ENCODE measurements at regions of chr1 and their contacts with region 1.

Region 1: DNA sequence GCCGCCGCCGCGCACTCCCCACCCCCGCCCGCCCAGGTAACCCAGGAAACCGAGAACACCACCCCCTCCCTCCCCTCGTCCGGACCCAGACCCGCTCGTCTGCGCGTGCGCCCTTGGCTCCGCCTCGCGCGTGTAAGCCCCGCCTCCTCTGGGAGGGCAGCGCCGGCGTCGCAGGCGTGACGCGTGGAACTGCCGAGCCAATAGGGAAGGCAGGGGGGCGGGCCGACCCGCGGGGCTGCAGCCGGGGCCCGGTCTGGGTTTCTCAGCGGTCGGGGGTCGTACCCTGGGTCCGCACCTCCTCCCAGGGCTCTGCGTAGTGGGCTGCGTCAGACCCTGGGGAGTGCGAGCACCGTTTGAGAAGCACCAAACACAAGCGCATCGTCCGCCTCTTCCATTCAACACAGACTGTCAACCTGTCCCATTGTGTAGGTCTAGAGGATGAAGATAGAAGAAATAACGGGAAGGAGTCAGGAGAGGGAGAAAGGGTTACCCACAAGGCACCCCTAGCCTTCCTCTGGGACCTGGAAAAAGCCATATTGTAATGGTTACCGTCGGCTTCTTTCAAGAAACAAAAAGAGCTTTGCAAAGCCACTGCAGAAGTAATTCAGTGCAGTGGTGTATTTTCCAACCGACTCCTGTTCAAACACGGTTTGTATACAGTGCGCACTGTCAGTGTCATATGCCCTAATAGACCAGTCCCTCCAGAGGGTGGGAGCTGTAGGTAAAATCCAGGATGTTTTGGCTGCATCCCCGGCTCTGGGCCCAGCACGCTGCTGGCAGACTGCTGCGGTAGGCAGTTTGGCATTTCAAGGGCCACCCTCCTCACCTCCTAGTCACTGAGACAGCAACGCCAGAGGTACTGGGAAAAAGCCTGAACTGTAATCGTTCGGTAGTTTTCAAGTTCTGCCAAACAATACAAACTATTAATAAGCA is 473 bp upstream of the LYST start:
- DNase-seq: peak; percentile 96
- H3K4me3 ChIP-seq: peak overlapping the region; percentile 78
- H3K27ac ChIP-seq: peak overlapping the region; percentile 82
- H3K4me1 ChIP-seq: peaks cover 21% of the 10 kb centered on the region
- CTCF ChIP-seq: no peak

Region 2: DNA sequence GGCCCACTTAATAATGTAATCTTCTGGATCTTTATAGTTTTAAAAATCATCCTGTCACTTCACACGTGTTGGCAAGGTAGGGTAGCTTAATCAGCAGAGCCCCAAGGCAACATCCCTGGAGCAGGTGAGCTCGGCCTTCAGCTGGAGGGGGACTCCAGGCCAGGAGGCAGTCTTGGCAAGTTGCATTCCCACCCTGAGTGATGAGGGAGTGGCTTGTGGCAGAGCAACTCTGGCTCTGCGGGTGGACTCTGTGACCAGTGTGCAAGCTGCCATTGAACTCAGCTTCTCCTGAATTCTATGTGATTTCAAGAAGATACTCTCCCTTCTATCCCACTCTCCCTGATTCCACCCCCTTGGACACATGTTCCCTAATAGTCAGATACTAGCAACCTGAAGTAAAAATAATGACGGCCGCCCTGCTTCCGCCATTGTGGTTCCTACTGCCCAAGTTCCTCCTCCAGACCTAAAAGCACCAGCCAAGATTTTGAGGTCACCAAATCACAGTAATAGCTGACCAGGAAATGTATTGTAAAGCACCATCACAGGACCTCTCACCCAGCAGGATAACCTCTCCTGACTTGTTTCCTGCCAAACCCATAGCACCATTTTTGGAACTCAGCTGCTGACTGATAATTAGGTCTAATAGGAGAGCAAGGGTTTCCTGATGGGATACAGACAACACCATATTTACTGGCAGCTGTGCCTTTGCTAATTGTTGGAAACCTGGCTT is 11.1 kb after region 1 on chr1:
- CTCF ChIA-PET with region 1: no interaction called
- POLR2A ChIA-PET with region 1: interaction called, 10 read pairs
- intact Hi-C with region 1: no loop called
- DNase-seq: no peak
- H3K4me3 ChIP-seq: no peak overlapping the region
- H3K27ac ChIP-seq: no peak overlapping the region
- H3K4me1 ChIP-seq: peaks cover 13% of the 10 kb centered on the region
- CTCF ChIP-seq: no peak

Region 3: DNA sequence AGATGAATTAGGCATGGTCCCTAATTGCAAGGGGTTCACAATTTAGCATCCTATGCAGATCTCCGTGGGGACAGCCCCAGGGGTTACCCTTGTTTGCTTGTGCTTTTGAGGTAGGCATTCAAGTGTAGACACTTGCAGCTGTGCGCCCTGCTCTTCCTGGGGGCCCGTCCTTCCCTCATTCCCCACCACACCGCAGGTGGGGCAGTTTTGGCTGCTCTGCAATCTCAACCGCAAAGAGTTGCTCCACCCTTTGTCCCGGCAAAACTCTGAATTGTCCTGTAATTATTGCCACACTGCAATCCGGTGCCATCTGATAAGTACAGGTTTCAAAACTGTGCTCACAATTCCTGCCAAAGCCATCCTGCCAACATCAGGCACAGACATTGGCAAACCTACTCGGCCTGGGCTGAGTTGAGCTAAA is 64.9 kb after region 1 on chr1:
- CTCF ChIA-PET with region 1: no interaction called
- POLR2A ChIA-PET with region 1: interaction called, 4 read pairs
- intact Hi-C with region 1: loop called (anchors 1 kb)
- DNase-seq: peak; percentile 41
- H3K4me3 ChIP-seq: no peak overlapping the region
- H3K27ac ChIP-seq: no peak overlapping the region
- H3K4me1 ChIP-seq: peaks cover 46% of the 10 kb centered on the region
- CTCF ChIP-seq: no peak

Region 4: GRCh38 chr1:235946571-235946981 is 79.4 kb after region 1 on chr1:
- CTCF ChIA-PET with region 1: no interaction called
- POLR2A ChIA-PET with region 1: no interaction called
- intact Hi-C with region 1: loop called (anchors 5 kb)
- DNase-seq: peak; percentile 13
- H3K4me3 ChIP-seq: no peak overlapping the region
- H3K27ac ChIP-seq: no peak overlapping the region
- H3K4me1 ChIP-seq: no peaks in the 10 kb centered on the region
- CTCF ChIP-seq: peak; percentile 61

Region 5: DNA sequence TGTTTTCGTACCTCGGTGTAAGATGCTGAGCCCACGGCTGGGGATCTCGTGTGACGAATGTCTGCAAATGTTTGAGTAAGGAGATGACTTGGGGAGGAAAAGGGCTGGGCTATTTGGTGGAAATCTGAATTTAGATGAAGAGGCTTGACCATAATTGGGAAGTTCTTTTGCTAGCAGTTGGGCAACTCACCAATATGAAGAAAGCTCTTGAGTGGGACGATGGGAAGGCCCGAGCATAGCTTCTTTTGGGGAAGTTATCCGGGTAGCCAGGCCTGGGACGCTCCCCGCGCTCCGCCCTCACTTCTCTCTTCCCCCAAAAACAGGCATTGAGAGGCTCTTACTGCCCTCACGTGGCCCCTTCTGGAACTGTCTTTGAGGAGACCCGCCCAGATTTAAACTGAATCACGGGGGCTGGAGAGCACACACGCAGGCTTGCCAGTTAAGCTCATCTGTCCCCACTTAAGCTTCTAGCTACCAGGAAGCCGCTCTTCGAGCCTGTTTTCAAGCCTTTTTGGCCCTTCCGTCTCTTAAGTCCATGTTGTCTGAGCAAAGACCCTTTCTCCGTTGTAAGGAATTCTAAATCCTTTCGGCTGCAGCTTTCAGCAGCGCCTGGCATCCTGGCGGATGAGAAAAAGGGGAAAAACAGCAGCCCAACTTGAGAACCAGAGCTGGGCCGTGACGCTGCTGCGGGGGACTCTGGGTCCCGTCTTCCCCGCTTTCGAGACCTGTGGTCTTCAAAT is 104.6 kb after region 1 on chr1:
- CTCF ChIA-PET with region 1: interaction called, 4 read pairs
- POLR2A ChIA-PET with region 1: interaction called, 5 read pairs
- intact Hi-C with region 1: loop called (anchors 1 kb)
- DNase-seq: peak; percentile 88
- H3K4me3 ChIP-seq: peak overlapping the region; percentile 10
- H3K27ac ChIP-seq: peak overlapping the region; percentile 6
- H3K4me1 ChIP-seq: peaks cover 7% of the 10 kb centered on the region
- CTCF ChIP-seq: peak; percentile 88

Region 6: DNA sequence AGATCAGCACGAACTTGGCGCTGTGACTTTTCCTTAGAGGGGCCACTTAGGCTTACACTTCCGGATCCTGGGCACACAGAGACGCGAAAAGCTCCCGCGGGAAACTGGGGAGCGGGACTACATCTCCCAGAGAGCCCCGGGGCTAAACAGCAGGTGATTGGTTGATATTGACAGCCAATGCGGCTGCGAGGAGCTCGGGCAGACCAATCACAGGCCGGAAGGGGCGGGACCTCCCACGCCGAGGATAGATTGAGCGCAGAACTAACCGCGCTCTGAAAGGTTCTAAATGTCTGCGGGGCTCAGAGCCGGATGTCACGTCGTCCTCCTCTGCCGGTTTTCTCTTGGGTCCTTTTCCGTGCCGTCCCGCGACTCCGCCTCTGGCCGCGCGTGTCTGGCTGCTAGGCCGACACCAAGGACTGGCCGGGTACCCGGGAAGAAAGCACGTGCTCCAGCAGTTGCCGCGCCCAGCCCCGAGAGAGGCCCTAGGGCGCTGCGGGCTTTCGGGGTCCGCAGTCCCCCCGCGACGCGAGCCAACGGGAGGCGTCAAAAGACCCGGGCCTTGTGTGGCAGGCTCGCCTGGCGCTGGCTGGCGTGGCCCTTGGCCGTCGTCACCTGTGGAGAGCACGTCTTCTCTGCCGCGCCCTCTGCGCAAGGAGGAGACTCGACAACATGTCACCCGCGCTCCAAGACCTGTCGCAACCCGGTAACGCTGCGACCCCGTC is 928.0 kb after region 1 on chr1 and contains the start of gene MTR:
- CTCF ChIA-PET with region 1: no interaction called
- POLR2A ChIA-PET with region 1: no interaction called
- intact Hi-C with region 1: loop called (anchors 2 kb)
- DNase-seq: peak; percentile 98
- H3K4me3 ChIP-seq: peak within 1 kb of the TSS; percentile 99
- H3K27ac ChIP-seq: peak within 1 kb of the TSS; percentile 77
- H3K4me1 ChIP-seq: peaks cover 27% of the 10 kb centered on the region
- CTCF ChIP-seq: no peak
- total RNA-seq, gene MTR: 22.3 and 23.0 TPM in 2 replicates

Measured in OCI-LY7 (cell line).